CD4-positive, alpha-beta T cell (primary cell): ENCODE measurements at regions of chr11 and their contacts with region 1.

Region 1: GRCh38 chr11:5712507-5712906 is 22.9 kb downstream of the TRIM22 start:
- DNase-seq: peak in 3 of 14 experiments; percentile 38 to 42 (median 42)
- ATAC-seq: no peak
- H3K4me3 ChIP-seq: no peak overlapping the region
- H3K4me3 Mint-ChIP-seq: no peak overlapping the region
- H3K27ac ChIP-seq: no peak overlapping the region
- H3K27ac Mint-ChIP-seq: peak overlapping the region; percentile 47
- H3K4me1 ChIP-seq: no peaks in the 10 kb centered on the region
- H3K4me1 Mint-ChIP-seq: no peaks in the 10 kb centered on the region
- H3K27me3 ChIP-seq: no peaks in the 10 kb centered on the region
- H3K27me3 Mint-ChIP-seq: no peaks in the 10 kb centered on the region
- CTCF ChIP-seq: peak; percentile 58

Region 2: GRCh38 chr11:5600374-5600851 is 112.1 kb before region 1 on chr11:
- CTCF ChIA-PET with region 1: no interaction called
- POLR2A ChIA-PET with region 1: no interaction called
- intact Hi-C with region 1: loop called (anchors 1 to 5 kb)
- DNase-seq: peak; percentile 40 to 78 (median 53)
- ATAC-seq: peak; percentile 90
- H3K4me3 ChIP-seq: no peak overlapping the region
- H3K4me3 Mint-ChIP-seq: no peak overlapping the region
- H3K27ac ChIP-seq: no peak overlapping the region
- H3K27ac Mint-ChIP-seq: no peak overlapping the region
- H3K4me1 ChIP-seq: peaks cover 8% of the 10 kb centered on the region
- H3K4me1 Mint-ChIP-seq: peaks cover 12% of the 10 kb centered on the region
- H3K27me3 ChIP-seq: peaks cover 0 to 8% of the 10 kb centered on the region in 2 experiments
- H3K27me3 Mint-ChIP-seq: peaks cover 20% of the 10 kb centered on the region
- CTCF ChIP-seq: peak; percentile 84

Region 3: GRCh38 chr11:5624489-5625279 is 87.8 kb before region 1 on chr11 and contains the start of gene TRIM34:
- CTCF ChIA-PET with region 1: no interaction called
- POLR2A ChIA-PET with region 1: no interaction called
- intact Hi-C with region 1: loop called in 1 of 2 experiments (anchors 5 kb)
- DNase-seq: peak; percentile 18 to 87 (median 47)
- ATAC-seq: peak; percentile 98
- H3K4me3 ChIP-seq: peak within 1 kb of the TSS; percentile 63
- H3K4me3 Mint-ChIP-seq: peak within 1 kb of the TSS; percentile 90
- H3K27ac ChIP-seq: peak within 1 kb of the TSS; percentile 43 to 50
- H3K27ac Mint-ChIP-seq: peak within 1 kb of the TSS; percentile 84
- H3K4me1 ChIP-seq: peaks cover 27% of the 10 kb centered on the region
- H3K4me1 Mint-ChIP-seq: peaks cover 53% of the 10 kb centered on the region
- H3K27me3 ChIP-seq: no peaks in the 10 kb centered on the region
- H3K27me3 Mint-ChIP-seq: no peaks in the 10 kb centered on the region
- CTCF ChIP-seq: no peak
- total RNA-seq, gene TRIM34: 3.0 to 3.5 TPM

Region 4: DNA sequence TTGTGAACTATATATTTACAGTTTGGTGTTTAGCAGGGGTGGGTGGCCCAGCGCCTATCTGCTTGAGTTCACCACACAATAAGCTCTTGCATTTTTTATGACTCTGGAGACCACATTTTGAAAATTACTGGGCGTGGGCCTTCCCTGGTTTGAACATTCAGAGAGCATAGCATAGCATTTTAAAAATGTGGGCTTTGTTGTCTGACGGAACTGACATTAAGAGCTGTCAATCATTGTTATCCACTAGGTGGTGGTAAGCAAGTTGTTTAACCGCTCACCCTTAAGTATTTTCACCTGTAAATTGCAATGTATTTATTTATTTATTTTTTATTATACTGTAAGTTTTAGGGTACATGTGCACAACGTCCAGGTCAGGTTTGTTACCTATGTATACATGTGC is 1308.8 kb after region 1 on chr11:
- CTCF ChIA-PET with region 1: no interaction called
- POLR2A ChIA-PET with region 1: no interaction called
- intact Hi-C with region 1: no loop called
- DNase-seq: no peak
- ATAC-seq: no peak
- H3K4me3 ChIP-seq: no peak overlapping the region
- H3K4me3 Mint-ChIP-seq: no peak overlapping the region
- H3K27ac ChIP-seq: no peak overlapping the region
- H3K27ac Mint-ChIP-seq: no peak overlapping the region
- H3K4me1 ChIP-seq: peaks cover 10% of the 10 kb centered on the region
- H3K4me1 Mint-ChIP-seq: peaks cover 7% of the 10 kb centered on the region
- H3K27me3 ChIP-seq: peaks cover 33 to 34% of the 10 kb centered on the region in 2 experiments
- H3K27me3 Mint-ChIP-seq: peaks cover 47% of the 10 kb centered on the region
- CTCF ChIP-seq: no peak